ENCODE measurements at regions of chr3 and their contacts with region 1.

Region 1: GRCh38 chr3:140910860-140911259 is 30.8 kb upstream of the SLC25A36 start:
- DNase-seq: no peak
- ATAC-seq: peak; percentile 95
- H3K4me3 Mint-ChIP-seq: peak overlapping the region; percentile 71
- H3K27ac Mint-ChIP-seq: 0 out of 2 replicates have a peak overlapping the region, but pooled peaks have one; percentile 22
- H3K4me1 Mint-ChIP-seq: 0 out of 2 replicates have a peak, but pooled peaks cover 2% of the 10 kb centered on the region
- H3K27me3 Mint-ChIP-seq: peaks cover 15% of the 10 kb centered on the region
- CTCF ChIP-seq: no peak

Region 2: GRCh38 chr3:140922634-140923033 is 11.8 kb after region 1 on chr3:
- CTCF ChIA-PET with region 1: interaction called, 10 read pairs
- POLR2A ChIA-PET with region 1: no interaction called
- DNase-seq: no peak
- ATAC-seq: peak; percentile 92
- H3K4me3 Mint-ChIP-seq: no peak overlapping the region
- H3K27ac Mint-ChIP-seq: no peak overlapping the region
- H3K4me1 Mint-ChIP-seq: no peaks in the 10 kb centered on the region
- H3K27me3 Mint-ChIP-seq: peaks cover 17% of the 10 kb centered on the region
- CTCF ChIP-seq: no peak; the same call in 1 of the 2 replicates

Measured in WTC11 (cell line).